ENCODE measurements at regions of chr1 and their contacts with region 1.

Region 1: GRCh38 chr1:182595641-182596240 is 6.7 kb upstream of the RNASEL start:
- DNase-seq: peak; percentile 86
- H3K4me3 Mint-ChIP-seq: no peak overlapping the region
- H3K27ac Mint-ChIP-seq: no peak overlapping the region
- H3K4me1 Mint-ChIP-seq: peaks cover 14% of the 10 kb centered on the region
- H3K27me3 Mint-ChIP-seq: no peaks in the 10 kb centered on the region

Region 2: DNA sequence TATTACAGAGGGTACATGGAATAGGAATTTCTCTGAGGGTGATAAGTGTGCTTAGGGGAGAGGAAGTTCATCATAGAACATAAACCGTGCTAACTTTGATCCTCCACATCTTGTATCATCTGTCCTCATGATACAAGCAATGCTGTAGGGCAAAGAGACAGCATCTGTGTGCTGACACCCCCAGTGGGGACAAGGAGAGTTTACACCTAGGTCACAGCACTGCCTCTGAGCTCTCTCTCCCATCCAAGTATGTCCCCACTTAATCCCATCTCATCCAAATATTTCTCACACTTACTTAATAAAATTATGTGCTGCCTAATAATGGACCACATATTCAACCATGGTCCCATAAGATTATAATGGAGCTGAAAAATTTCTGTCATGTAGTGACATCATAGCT is 191.0 kb before region 1 on chr1:
- CTCF ChIA-PET with region 1: no interaction called
- intact Hi-C with region 1: no loop called
- DNase-seq: no peak
- H3K4me3 Mint-ChIP-seq: no peak overlapping the region
- H3K27ac Mint-ChIP-seq: no peak overlapping the region
- H3K4me1 Mint-ChIP-seq: no peaks in the 10 kb centered on the region
- H3K27me3 Mint-ChIP-seq: peaks cover 18% of the 10 kb centered on the region

Region 3: DNA sequence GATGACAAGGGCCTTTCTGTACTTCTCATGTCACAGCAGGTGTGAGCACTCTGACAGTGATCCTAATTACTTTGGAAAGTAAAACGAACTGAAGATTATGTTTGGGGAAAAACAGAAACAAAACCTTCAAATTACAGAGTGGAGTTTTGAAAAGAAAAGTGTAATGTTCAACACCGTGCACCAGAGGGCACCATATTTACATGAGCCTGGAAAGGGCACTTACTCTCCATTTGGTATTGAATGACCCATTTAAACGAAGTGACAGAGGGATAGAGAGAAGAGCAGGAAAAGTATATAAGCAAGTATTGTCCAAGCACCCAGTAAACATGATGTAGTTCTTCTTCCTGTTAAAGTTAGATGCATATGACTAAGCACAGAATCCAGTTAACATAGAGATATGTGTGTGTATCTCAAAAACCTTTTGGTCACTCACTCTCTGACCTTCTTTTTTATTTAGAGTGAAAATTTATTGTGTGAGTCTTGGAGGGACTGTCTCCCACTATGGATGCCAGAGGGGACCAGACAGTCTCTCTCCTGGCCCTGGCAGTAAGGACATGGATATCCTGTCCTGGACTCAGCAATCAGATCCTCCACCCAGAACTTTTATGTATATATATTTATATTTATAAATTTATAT is 149.6 kb before region 1 on chr1:
- CTCF ChIA-PET with region 1: no interaction called
- intact Hi-C with region 1: loop called (anchors 1 kb)
- DNase-seq: peak; percentile 59
- H3K4me3 Mint-ChIP-seq: no peak overlapping the region
- H3K27ac Mint-ChIP-seq: no peak overlapping the region
- H3K4me1 Mint-ChIP-seq: no peaks in the 10 kb centered on the region
- H3K27me3 Mint-ChIP-seq: no peaks in the 10 kb centered on the region

Region 4: GRCh38 chr1:182629499-182630096 is 33.9 kb after region 1 on chr1:
- CTCF ChIA-PET with region 1: interaction called, 22 read pairs
- intact Hi-C with region 1: no loop called
- DNase-seq: peak; percentile 68
- H3K4me3 Mint-ChIP-seq: no peak overlapping the region
- H3K27ac Mint-ChIP-seq: peak overlapping the region; percentile 51
- H3K4me1 Mint-ChIP-seq: peaks cover 57% of the 10 kb centered on the region
- H3K27me3 Mint-ChIP-seq: no peaks in the 10 kb centered on the region

Region 5: DNA sequence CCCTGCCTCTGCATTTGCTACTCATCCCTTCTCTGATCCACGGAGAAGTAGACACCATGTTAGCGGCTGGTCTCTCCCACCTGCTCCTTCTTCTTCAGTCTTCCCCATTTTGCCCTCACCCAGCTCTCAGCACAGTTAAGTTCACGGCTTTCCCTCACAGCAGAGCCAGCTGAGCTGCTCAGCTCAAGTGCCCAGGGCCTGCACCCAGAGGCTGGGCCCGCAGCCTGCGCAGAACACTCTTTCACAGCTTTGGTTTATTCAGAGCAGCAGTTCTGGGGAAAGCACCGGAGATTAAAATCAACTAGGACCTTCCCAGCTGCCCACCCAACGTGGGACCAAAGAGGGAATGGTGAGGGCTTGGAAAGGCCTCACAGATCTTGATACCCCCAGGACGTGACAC is 46.7 kb after region 1 on chr1:
- CTCF ChIA-PET with region 1: interaction called, 11 read pairs
- intact Hi-C with region 1: no loop called
- DNase-seq: no peak
- H3K4me3 Mint-ChIP-seq: no peak overlapping the region
- H3K27ac Mint-ChIP-seq: no peak overlapping the region
- H3K4me1 Mint-ChIP-seq: no peaks in the 10 kb centered on the region
- H3K27me3 Mint-ChIP-seq: no peaks in the 10 kb centered on the region

Region 6: DNA sequence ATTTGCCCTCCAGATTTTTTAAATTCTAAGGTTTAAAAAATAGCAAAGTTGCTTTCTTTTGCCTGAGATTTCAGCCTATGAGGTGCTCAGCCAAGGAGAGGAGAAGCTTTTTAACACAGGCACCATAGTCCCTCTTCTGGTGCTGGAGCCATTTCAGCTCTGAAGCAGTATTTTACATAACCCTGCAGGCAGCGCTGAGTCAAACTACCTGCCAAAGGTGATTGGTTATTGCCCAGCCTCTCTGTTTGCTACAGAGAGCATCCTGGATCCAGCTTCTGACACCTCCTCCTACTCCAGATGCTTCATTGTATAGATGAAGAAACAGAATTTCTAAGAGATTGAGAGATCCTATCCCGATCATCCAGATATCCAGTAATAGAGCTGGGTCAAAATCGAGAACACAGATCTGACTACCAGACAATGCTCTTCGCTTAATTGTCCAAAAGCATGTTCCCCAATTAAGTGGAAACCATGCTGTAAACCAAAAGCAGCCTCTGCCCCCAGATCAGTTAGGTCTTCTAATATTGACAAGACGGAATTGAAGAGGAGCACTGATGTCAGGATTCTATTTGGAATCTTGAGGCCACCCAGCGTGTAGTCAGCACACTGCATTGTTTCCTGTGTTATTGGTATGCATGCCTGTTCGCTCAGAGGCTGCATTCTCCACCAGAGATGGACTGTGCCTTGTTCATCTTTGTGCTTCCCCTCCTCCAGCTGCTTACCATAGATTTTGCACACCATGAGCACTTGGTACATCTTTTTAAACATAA is 66.6 kb after region 1 on chr1:
- CTCF ChIA-PET with region 1: interaction called, 12 read pairs
- intact Hi-C with region 1: no loop called
- DNase-seq: peak; percentile 21
- H3K4me3 Mint-ChIP-seq: no peak overlapping the region
- H3K27ac Mint-ChIP-seq: no peak overlapping the region
- H3K4me1 Mint-ChIP-seq: no peaks in the 10 kb centered on the region
- H3K27me3 Mint-ChIP-seq: no peaks in the 10 kb centered on the region

Region 7: GRCh38 chr1:182781841-182782586 is 186.3 kb after region 1 on chr1:
- CTCF ChIA-PET with region 1: interaction called, 797 read pairs
- intact Hi-C with region 1: loop called (anchors 1 kb)
- DNase-seq: peak; percentile 89
- H3K4me3 Mint-ChIP-seq: no peak overlapping the region
- H3K27ac Mint-ChIP-seq: no peak overlapping the region
- H3K4me1 Mint-ChIP-seq: peaks cover 18% of the 10 kb centered on the region
- H3K27me3 Mint-ChIP-seq: no peaks in the 10 kb centered on the region